Panc1 (cell line): ENCODE measurements at regions of chr6 and their contacts with region 1.

Region 1: GRCh38 chr6:10521104-10521808 is at the start of gene GCNT2:
- DNase-seq: peak; percentile 79
- ATAC-seq: peak; percentile 78
- H3K4me3 ChIP-seq: peak within 1 kb of the TSS; percentile 48 to 74
- H3K27ac ChIP-seq: peak within 1 kb of the TSS; percentile 98
- H3K4me1 ChIP-seq: peaks cover 35% of the 10 kb centered on the region
- H3K27me3 ChIP-seq: no peaks in the 10 kb centered on the region
- CTCF ChIP-seq: no peak
- total RNA-seq, gene GCNT2: 42.8 TPM

Region 2: DNA sequence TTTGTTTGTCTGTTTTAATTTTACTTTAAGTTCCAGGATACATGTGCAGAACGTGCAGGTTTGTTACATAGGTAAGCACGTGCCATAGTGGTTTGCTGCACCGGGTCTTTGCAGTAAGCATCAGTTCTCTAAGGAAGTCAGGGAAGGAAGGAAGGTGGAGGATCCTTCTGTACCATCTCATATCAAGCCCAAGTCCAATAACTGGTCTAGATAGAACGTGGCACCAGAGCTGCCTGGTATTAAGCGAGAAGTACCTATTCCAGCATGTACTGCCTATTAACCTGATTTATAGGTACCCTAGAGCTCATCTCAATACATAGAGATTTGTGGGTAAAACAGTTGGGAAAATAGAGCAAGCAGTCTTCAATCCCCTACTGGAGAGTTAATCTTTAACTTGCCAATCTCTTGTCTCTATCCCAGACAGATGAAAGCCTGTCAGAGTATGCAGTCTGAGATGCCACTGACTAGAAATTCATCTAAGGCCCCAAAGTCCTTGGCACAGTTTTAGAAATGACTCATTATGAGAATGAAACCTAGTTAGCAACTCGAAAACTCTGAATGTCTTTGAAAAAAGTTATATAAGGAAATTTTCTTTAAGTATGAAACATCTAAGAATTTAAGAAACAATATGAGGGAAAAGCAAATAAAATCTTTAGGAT is 251.3 kb before region 1 on chr6:
- CTCF ChIA-PET with region 1: no interaction called
- POLR2A ChIA-PET with region 1: no interaction called
- in situ Hi-C with region 1: no loop called
- intact Hi-C with region 1: no loop called
- DNase-seq: no peak
- ATAC-seq: no peak
- H3K4me3 ChIP-seq: no peak overlapping the region
- H3K27ac ChIP-seq: no peak overlapping the region
- H3K4me1 ChIP-seq: 0 out of 2 replicates have a peak, but pooled peaks cover 3% of the 10 kb centered on the region
- H3K27me3 ChIP-seq: no peaks in the 10 kb centered on the region
- CTCF ChIP-seq: no peak

Region 3: DNA sequence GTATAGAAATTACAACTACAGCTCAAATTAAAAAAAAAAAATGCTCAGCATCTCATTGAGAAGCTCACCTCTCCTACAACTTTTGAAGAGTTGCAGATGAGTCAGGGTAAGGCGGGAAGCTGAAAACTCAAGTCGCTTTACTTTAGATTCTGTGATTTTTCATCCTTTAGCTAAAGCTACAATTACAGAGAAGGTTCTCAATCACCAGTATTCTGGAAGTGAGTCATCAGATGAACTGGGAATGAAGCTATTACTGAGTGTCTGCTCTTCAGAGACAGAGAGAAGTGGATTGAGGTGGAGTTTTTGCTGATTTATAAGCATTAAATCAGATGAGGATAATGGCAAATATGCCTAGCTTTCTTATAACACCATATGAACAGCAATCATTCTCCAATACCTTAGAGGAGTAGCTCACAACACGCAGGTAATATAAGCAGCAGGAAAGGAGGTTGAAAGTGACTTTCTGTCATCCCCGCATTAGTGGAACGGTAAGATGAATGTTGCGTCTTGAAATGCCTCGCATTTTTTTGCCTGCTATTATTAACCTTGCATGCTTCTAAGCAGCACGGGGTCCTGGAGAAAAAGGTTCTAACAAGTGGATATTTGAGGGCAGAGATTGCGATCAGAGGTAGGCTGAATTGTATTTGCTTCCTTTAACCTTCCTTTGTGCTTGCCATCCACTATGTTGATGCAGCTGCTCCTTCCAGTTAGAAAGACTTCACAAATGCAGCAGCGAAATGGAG is 198.1 kb before region 1 on chr6:
- CTCF ChIA-PET with region 1: interaction called, 11 read pairs
- POLR2A ChIA-PET with region 1: no interaction called
- in situ Hi-C with region 1: no loop called
- intact Hi-C with region 1: no loop called
- DNase-seq: no peak
- ATAC-seq: no peak
- H3K4me3 ChIP-seq: no peak overlapping the region
- H3K27ac ChIP-seq: peak overlapping the region; percentile 52; the same call in 1 of the 2 replicates
- H3K4me1 ChIP-seq: peaks cover 3% of the 10 kb centered on the region; the same call in 1 of the 2 replicates
- H3K27me3 ChIP-seq: no peaks in the 10 kb centered on the region
- CTCF ChIP-seq: no peak

Region 4: DNA sequence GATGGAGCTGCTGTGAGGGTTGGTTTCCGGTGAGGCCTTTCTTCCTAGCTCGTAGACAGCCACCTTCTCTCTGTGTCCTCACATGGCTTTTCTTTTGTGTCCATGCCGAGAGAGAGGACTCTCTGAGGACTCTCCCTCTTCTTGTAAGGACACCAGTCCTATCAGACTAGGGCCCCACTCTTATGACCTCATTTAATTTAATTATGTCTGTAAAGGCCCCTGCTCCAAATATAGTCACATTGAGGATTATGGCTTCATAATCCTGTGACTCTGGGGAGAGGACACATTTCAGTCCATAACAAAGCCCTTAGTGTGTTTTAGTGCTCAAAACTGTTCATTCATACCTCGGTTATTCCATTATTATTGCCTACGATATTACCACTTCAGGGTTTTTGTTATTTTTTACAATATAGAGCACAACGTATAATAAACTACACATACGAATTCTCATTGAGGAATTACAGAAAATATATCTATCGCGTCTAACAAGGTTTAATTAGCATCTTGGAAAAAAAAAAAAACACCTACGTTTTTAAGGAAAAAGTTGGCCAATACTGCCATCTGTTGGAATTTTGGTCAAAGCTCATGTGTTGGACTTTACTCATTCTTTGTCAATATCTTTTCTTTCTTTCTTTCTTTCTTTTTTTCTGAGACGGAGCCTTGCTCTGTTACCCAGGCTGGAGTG is 86.4 kb before region 1 on chr6:
- CTCF ChIA-PET with region 1: no interaction called
- POLR2A ChIA-PET with region 1: no interaction called
- in situ Hi-C with region 1: no loop called
- intact Hi-C with region 1: no loop called
- DNase-seq: no peak
- ATAC-seq: peak; percentile 57
- H3K4me3 ChIP-seq: no peak overlapping the region
- H3K27ac ChIP-seq: peak overlapping the region; percentile 57
- H3K4me1 ChIP-seq: peaks cover 13% of the 10 kb centered on the region; the same call in 1 of the 2 replicates
- H3K27me3 ChIP-seq: no peaks in the 10 kb centered on the region
- CTCF ChIP-seq: peak; percentile 75

Region 5: DNA sequence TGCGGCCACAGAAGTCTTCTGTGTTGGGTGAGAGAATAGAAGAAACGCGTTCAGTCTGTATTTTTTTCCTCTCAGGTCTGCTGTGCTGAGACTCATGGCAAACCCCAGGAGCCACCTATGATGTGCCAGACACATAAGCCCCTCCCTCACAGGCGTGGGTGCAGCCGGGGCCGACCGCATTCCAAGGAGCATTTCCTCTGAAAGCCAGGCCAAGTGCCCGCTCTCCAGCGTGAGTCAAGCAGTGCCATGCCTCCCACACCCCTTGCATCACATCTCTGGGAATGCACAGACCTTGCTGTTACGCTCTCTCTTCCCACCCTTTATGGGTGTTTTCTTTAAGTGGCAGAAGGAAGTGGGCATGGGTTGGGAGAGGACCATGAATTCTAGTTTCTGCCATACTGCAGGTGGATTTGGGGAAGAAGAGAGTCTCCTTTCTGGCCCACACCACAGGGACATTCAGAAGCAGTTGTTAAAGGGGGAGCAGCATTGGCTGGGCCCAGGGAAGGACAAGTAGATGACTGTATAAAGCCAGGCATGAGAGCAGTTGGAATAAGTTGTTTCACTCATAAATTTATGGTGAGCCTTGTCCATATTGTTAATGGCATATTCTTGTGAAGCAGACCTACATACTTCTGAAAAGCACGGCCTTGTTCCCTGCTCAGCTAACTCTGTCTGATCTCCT is 69.3 kb before region 1 on chr6:
- CTCF ChIA-PET with region 1: no interaction called
- POLR2A ChIA-PET with region 1: no interaction called
- in situ Hi-C with region 1: no loop called
- intact Hi-C with region 1: no loop called
- DNase-seq: no peak
- ATAC-seq: peak; percentile 93
- H3K4me3 ChIP-seq: no peak overlapping the region
- H3K27ac ChIP-seq: no peak overlapping the region
- H3K4me1 ChIP-seq: no peaks in the 10 kb centered on the region
- H3K27me3 ChIP-seq: no peaks in the 10 kb centered on the region
- CTCF ChIP-seq: no peak

Region 6: DNA sequence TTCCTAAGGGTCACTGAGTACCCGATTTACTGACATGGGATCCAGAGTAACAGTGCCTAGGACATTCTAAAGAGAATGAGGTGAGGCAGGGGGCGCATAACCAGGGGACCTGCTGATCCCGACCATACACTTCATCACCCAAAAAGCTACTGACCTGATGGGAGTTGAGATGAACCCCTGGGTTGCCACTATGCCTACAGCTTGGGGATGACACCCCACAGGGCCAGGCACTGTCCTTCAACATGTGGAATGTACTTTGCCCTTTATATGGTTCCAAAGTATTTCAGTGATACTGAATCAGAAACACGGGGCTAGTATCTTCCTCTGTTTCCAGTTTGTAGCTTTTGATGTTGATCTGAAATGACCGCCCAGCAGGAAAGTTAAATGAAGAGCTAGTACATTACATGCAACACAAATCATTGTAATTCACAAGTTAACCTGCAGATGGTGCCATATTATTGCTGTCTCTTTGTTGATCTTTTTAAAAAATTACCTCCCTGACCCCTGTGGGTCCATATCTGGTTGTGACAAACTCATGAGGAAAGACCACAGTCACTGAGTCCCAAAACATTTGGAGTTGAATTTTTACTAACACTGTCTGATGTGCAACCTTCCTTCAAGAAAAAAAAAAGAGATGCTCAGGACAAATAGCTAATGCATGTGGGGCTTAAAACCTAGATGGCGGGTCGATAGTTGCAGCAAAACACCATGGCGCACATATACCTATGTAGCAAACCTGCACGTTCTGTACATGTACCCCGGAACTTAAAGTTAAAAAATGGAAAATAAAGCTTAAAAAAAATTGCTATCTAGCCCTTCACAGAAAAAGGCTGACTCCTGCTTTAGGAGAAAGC is 42.8 kb before region 1 on chr6:
- CTCF ChIA-PET with region 1: interaction called, 4 read pairs
- POLR2A ChIA-PET with region 1: interaction called, 12 read pairs
- in situ Hi-C with region 1: no loop called
- intact Hi-C with region 1: no loop called
- DNase-seq: peak; percentile 52
- ATAC-seq: peak; percentile 80
- H3K4me3 ChIP-seq: no peak overlapping the region
- H3K27ac ChIP-seq: no peak overlapping the region
- H3K4me1 ChIP-seq: no peaks in the 10 kb centered on the region
- H3K27me3 ChIP-seq: no peaks in the 10 kb centered on the region
- CTCF ChIP-seq: peak; percentile 81

Region 7: GRCh38 chr6:10510592-10511367 is 10.5 kb before region 1 on chr6:
- CTCF ChIA-PET with region 1: interaction called, 4 read pairs
- POLR2A ChIA-PET with region 1: interaction called, 12 read pairs
- in situ Hi-C with region 1: no loop called
- intact Hi-C with region 1: no loop called
- DNase-seq: no peak
- ATAC-seq: peak; percentile 99
- H3K4me3 ChIP-seq: peak overlapping the region; percentile 17 to 46
- H3K27ac ChIP-seq: peak overlapping the region; percentile 64
- H3K4me1 ChIP-seq: peaks cover 16% of the 10 kb centered on the region
- H3K27me3 ChIP-seq: no peaks in the 10 kb centered on the region
- CTCF ChIP-seq: peak; percentile 94

Region 8: DNA sequence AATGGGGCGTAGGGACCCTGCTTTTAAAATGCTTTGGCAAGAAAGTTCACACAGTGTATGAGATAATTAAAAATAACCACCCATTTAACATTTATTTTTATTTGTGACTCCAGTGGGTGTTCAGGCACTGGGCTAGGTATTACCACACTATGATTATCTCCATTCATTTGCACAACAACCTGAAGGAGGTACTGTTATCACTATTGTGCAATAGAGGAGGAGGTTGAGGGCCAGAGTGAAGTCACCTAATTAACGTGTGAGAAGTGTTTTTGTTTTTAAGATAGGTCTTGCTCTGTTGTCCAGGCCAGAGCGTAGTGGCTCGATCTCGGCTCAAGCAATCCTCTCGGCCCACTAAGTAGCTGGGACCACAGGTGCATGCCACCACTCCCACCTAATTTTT is 287.8 kb after region 1 on chr6:
- CTCF ChIA-PET with region 1: no interaction called
- POLR2A ChIA-PET with region 1: interaction called, 13 read pairs
- in situ Hi-C with region 1: no loop called
- intact Hi-C with region 1: loop called (anchors 10 kb)
- DNase-seq: no peak
- ATAC-seq: no peak
- H3K4me3 ChIP-seq: no peak overlapping the region
- H3K27ac ChIP-seq: no peak overlapping the region
- H3K4me1 ChIP-seq: no peaks in the 10 kb centered on the region
- H3K27me3 ChIP-seq: no peaks in the 10 kb centered on the region
- CTCF ChIP-seq: no peak

Region 9: DNA sequence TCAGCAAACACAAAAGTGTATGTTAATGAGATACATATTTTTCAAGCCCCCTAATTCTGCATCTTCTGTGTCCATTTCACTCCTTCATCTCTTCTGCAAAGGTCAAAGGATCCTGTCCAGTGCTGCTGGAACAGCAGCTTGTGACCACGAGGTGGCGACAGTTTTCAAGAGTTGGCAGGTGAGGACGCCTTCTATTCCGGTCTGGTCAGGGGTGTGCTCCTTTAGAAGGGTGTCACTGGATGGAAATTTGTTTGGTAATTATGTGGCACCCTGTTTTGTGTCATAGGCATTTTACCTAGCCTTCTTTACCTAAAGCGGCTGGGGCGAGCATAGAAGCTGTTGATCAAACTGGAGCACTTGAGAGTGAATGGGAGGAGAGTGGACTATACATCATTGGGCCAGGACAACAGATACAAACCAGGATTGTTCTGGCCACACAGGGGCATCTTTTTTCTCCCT is 623.2 kb after region 1 on chr6:
- CTCF ChIA-PET with region 1: no interaction called
- POLR2A ChIA-PET with region 1: interaction called, 16 read pairs
- in situ Hi-C with region 1: no loop called
- intact Hi-C with region 1: no loop called
- DNase-seq: peak; percentile 54
- ATAC-seq: peak; percentile 92
- H3K4me3 ChIP-seq: no peak overlapping the region
- H3K27ac ChIP-seq: no peak overlapping the region
- H3K4me1 ChIP-seq: 0 out of 2 replicates have a peak, but pooled peaks cover 3% of the 10 kb centered on the region
- H3K27me3 ChIP-seq: no peaks in the 10 kb centered on the region
- CTCF ChIP-seq: peak; percentile 91